ENCODE measurements at regions of chr5 and their contacts with region 1.

Region 1: DNA sequence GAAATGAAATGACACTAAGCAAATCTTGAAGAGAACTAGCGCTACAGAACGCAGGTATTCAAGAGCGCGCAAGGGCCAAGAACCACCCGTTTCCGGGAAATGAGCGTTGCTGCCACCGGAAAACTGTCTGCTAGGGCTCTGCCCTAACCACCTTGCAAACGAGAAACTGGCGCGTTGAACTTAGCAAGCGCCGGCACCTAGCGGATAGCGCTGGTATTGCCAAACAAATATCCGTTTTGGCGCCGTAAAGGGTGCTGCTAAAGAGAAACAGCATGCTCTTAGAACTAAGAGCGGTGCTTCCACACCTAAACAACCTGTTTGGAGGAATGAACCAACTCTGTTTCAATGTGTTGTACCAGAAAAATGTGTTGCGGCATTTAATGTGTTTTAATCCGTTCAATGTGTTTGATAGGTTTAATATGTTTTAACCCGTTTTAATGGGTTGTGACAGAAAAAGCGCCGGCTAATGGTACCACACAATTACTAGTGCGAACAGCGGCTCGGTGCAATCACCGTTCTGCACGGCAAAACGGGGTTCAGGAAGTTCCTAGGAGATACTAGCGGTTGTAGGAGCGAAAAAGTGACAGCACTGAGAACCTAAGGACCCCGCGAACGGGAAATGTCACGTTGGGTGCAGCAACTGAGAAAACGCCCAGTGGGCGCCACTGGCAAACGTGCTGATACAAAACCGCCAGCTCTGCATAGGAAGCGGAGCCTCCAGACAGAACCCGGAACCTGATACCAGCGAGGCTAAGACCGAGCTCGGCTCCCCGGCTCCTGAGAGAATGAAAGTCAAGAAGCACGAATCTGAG is at the start of gene ANXA2R:
- DNase-seq: peak; percentile 85 to 93
- ATAC-seq: peak; percentile 49 to 62
- H3K4me3 ChIP-seq: peak within 1 kb of the TSS; percentile 69 to 93 (median 82)
- H3K27ac ChIP-seq: peak within 1 kb of the TSS; percentile 96 to 99 (median 97)
- H3K4me1 ChIP-seq: peaks cover 10 to 15% of the 10 kb centered on the region in 2 donors
- H3K27me3 ChIP-seq: no peaks in the 10 kb centered on the region
- CTCF ChIP-seq: peak; percentile 87 to 92 (median 91)
- POLR2A ChIP-seq: peak in 1 of 2 donors; percentile 4
- total RNA-seq, gene ANXA2R: 1.1 to 3.3 (median 1.4) TPM

Region 2: DNA sequence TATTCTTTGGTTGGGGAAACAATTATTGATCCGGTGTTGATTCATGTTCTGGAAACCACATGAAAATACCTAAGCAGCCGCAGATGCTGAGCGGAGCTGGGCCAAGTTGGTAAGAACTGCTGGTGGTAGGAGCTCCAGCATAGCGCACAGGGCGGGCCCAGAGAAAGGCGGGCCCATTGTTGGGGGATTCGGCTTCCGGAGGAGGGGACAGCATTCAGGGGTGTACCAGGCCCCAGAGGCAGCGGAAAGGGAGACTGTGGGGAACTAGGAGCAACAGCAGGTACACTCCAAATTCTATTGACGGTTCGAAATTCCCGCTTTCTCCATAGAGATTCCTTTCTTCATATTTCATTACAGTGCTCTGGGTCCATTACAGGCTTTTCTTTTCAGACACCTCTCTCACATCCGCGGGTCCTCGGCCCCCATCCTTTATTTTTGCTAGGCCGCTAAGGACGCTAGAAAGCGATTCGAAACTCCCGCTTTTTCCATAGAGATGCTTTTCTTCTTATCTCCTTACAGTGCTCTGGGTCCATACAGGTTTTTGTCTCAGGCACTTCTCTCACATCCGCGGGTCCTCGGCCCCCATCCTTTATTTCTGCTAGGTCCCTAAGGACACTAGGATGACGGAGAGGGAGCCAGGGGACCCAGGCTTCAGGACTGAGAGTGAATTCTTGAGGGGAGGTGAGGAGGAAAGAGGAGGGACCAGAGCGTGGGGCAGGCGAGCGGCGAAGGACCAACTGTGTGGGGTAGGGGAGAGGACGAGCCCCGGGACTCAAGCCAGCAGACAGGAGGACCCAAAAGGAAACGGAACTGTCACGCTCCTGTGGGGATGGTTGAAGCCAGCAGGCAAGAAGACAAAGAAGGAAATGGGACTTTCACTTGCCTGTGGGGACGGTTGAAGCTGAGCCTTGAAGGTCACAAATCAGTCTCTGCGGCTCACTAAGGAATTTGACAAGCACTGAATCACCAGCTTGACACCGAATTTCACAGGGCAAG is 283.6 kb before region 1 on chr5 and contains the start of gene CCDC152:
- in situ Hi-C with region 1: no loop called
- intact Hi-C with region 1: no loop called
- DNase-seq: peak in 1 of 2 donors; percentile 12
- ATAC-seq: no peak
- H3K4me3 ChIP-seq: peak within 1 kb of the TSS; percentile 26 to 48 (median 34)
- H3K27ac ChIP-seq: no peak within 1 kb of the TSS
- H3K4me1 ChIP-seq: peaks cover 0 to 8% of the 10 kb centered on the region in 2 donors
- H3K27me3 ChIP-seq: no peaks in the 10 kb centered on the region
- CTCF ChIP-seq: no peak
- POLR2A ChIP-seq: no peak
- total RNA-seq, gene CCDC152: 0.13 to 1.1 (median 0.65) TPM

Region 3: DNA sequence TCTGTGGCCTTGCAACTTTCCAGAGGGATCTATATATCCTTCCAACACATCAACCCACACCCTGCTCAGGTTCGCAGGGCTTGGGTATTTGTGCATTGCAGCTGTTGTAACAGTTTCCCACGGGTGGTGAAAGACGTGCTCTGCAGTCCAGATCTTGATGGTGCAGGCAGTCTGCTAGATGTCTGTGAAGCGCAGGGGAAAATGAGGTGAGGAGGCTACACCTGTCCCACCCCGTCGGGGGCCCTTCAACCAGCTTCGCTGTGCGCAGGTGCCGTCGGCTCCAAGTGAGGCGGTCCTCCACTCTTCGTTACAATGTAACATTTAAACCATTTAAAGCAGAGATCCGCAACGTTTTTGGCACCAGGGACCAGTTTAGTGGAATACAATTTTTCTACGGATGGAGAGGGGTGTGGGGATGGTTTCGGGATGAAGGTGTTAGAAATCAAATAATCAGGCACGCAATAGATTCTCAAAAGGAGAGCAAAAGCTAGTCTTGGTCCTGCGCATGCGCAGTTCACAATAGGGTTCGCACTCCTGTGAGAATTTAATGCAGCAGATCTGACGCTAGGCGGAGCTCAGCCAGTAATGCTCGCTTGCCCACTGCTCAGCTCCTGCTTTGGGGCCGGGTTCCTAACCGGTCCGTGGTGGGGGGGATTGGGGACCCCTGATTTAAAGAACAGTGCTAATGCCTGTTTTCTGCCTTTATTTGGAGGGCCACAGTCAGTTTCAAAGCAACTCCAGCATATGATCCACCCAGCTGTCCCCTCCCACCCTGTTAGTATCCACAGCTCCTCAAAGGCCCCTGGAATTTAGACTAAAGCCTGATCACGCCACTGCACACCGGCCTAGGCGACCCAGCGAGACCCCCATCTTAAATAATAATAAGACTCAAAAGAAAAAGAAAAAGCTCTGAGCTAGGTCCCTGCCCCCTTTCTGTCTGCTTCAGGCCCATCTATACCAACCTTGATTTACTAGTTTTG is 131.7 kb before region 1 on chr5:
- in situ Hi-C with region 1: loop called in 1 of 4 experiments (anchors 25 kb)
- intact Hi-C with region 1: loop called (anchors 2 kb)
- DNase-seq: peak; percentile 75 to 81
- ATAC-seq: peak; percentile 92 to 96
- H3K4me3 ChIP-seq: peak overlapping the region; percentile 52 to 64 (median 56)
- H3K27ac ChIP-seq: peak overlapping the region in 1 of 4 donors; percentile 11
- H3K4me1 ChIP-seq: no peaks in the 10 kb centered on the region
- H3K27me3 ChIP-seq: no peaks in the 10 kb centered on the region
- CTCF ChIP-seq: peak; percentile 73 to 87 (median 83)
- POLR2A ChIP-seq: no peak

Region 4: DNA sequence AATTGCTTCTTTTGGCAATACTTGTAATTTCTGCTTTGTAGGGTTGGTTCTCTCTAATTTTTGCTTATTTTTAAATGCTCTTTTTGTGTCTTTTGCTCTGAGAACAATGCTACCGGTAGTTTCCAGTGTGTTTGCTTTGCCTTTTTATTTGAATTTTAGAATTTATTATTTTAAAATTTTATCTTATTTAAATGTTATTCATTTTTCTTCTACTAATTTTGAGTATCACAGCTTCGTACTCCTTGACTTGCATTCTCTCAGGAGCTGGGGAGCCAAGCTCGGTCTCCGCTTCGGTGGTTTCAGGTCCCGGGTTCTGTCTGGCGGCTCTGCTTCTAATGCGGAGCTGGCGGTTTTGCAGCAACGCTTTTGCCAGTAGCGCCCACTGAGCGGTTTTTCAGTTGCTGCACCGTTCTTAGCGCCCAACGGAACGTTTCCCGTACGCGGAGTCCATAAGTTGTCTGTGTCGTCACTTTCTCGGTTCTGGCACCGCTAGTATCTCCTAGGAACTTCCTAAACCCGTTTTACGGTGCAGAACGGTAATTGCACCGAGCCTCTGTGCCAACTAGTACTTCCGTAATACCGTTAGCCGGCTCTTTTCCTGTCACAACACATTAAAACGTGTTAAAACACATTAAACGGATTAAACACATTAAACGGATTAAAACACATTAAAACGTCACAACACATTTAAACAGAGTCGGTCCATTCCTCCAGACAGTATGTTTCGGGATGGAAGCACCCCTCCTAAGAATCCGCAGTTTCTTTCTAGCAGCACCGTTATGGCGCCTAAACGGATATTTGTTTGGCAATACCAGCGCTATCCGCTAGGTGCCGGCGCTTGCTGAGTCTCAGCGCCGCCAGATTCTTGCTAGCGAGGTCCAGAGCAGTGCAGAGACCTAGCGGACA is 46.0 kb before region 1 on chr5:
- in situ Hi-C with region 1: no loop called
- intact Hi-C with region 1: loop called (anchors 1 kb)
- DNase-seq: peak; percentile 64 to 85
- ATAC-seq: peak; percentile 87 to 88
- H3K4me3 ChIP-seq: peak overlapping the region; percentile 46 to 70 (median 66)
- H3K27ac ChIP-seq: peak overlapping the region; percentile 85 to 93 (median 88)
- H3K4me1 ChIP-seq: peaks cover 5 to 15% of the 10 kb centered on the region in 2 donors
- H3K27me3 ChIP-seq: peaks cover 68 to 83% (median 69%) of the 10 kb centered on the region in 3 donors
- CTCF ChIP-seq: peak; percentile 84 to 92 (median 89)
- POLR2A ChIP-seq: no peak

Region 5: DNA sequence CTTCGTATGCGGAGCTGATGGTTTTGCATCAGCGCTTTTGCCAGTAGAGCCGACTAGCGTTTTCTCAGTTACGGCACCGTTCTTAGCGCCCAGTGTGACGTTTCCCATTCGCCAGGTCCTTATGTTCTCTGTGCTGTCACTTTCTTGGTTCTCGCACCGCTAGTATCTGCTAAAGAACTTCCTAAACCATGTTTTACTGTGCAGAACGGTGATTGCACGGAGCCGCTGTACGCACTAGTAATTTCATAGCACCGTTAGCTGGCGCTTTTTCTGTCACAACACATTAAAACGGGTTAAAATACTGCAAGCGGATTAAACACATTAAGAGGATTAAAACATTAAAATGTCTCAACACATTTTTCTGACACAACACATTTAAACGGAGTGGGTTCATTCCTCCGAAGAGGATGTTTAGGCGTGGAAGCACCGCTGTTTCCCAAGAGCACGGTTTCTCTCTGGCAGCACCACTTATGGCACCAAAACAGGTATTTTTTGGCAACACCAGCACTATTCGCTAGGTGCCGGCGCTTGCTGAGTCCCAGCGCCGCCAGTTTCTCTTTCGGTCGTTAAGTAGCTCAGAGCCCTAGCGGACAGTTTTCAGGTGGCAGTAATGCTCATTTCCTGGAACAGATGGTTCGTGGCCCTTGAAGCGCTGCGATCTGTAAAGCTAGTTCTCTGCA is 20.7 kb before region 1 on chr5:
- in situ Hi-C with region 1: no loop called
- intact Hi-C with region 1: loop called (anchors 1 kb)
- DNase-seq: peak; percentile 53 to 74
- ATAC-seq: peak; percentile 62 to 67
- H3K4me3 ChIP-seq: peak overlapping the region; percentile 68 to 90 (median 80)
- H3K27ac ChIP-seq: peak overlapping the region; percentile 95 to 100 (median 96)
- H3K4me1 ChIP-seq: peaks cover 6 to 19% of the 10 kb centered on the region in 2 donors
- H3K27me3 ChIP-seq: peaks cover 0 to 9% (median 0%) of the 10 kb centered on the region in 3 donors
- CTCF ChIP-seq: peak in 4 of 5 experiments; percentile 28 to 65 (median 51)
- POLR2A ChIP-seq: no peak

Region 6: GRCh38 chr5:43120720-43121564 is 80.4 kb after region 1 on chr5 and contains the start of gene ZNF131:
- in situ Hi-C with region 1: no loop called
- intact Hi-C with region 1: loop called (anchors 1 kb)
- DNase-seq: peak; percentile 93 to 94
- ATAC-seq: peak; percentile 83 to 86
- H3K4me3 ChIP-seq: peak within 1 kb of the TSS; percentile 86 to 94 (median 92)
- H3K27ac ChIP-seq: peak within 1 kb of the TSS; percentile 94 to 98 (median 96)
- H3K4me1 ChIP-seq: peaks cover 35 to 50% of the 10 kb centered on the region in 2 donors
- H3K27me3 ChIP-seq: no peaks in the 10 kb centered on the region
- CTCF ChIP-seq: peak in 1 of 5 experiments; percentile 19
- POLR2A ChIP-seq: peak in 1 of 2 donors; percentile 86
- total RNA-seq, gene ZNF131: 16.4 to 44.6 (median 18.7) TPM

Measured in gastrocnemius medialis (tissue), 4 donors.